ENCODE measurements at regions of chr10 and their contacts with region 1.

Region 1: GRCh38 chr10:19412531-19412930 is 363.9 kb downstream of the MALRD1 start:
- DNase-seq: no peak
- ATAC-seq: no peak
- H3K4me3 ChIP-seq: no peak overlapping the region
- H3K27ac ChIP-seq: no peak overlapping the region
- H3K4me1 ChIP-seq: no peaks in the 10 kb centered on the region
- H3K27me3 ChIP-seq: no peaks in the 10 kb centered on the region
- CTCF ChIP-seq: peak; percentile 25; the same call in 1 of the 2 replicates

Region 2: DNA sequence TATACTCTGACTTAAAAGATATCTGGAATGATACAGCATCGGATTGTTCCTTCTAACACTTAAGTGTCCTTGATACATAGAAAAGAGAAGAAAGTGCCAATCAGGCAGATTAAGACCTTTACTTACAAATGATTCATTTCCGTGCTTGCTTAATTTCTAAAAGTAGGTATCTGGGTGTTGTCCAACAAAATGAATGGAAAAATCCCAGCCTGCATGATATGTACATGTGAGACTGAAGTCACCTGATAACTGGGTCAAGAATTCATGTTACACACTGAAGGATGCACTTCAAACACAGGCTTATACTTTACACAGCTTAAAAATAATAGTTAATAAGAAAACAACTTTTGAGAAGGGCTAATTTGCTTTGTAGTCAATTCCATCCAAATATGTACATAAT is 378.5 kb after region 1 on chr10:
- CTCF ChIA-PET with region 1: no interaction called
- POLR2A ChIA-PET with region 1: no interaction called
- in situ Hi-C with region 1: no loop called
- intact Hi-C with region 1: loop called (anchors 10 kb)
- DNase-seq: no peak
- ATAC-seq: no peak
- H3K4me3 ChIP-seq: no peak overlapping the region
- H3K27ac ChIP-seq: no peak overlapping the region
- H3K4me1 ChIP-seq: no peaks in the 10 kb centered on the region
- H3K27me3 ChIP-seq: no peaks in the 10 kb centered on the region
- CTCF ChIP-seq: no peak

Measured in Panc1 (cell line).